ENCODE measurements at regions of chr7 and their contacts with region 1.

Region 1: GRCh38 chr7:32479574-32480200 is 10.5 kb downstream of the LSM5 start:
- DNase-seq: peak; percentile 43
- H3K4me3 ChIP-seq: no peak overlapping the region
- H3K27ac ChIP-seq: no peak overlapping the region
- H3K27me3 ChIP-seq: no peaks in the 10 kb centered on the region
- CTCF ChIP-seq: peak; percentile 94

Region 2: GRCh38 chr7:31134246-31135188 is 1345.2 kb before region 1 on chr7:
- CTCF ChIA-PET with region 1: interaction called, 12 read pairs
- POLR2A ChIA-PET with region 1: no interaction called
- DNase-seq: peak; percentile 23
- H3K4me3 ChIP-seq: no peak overlapping the region
- H3K27ac ChIP-seq: no peak overlapping the region
- H3K27me3 ChIP-seq: no peaks in the 10 kb centered on the region
- CTCF ChIP-seq: peak; percentile 72

Region 3: GRCh38 chr7:31744294-31744874 is 735.3 kb before region 1 on chr7:
- CTCF ChIA-PET with region 1: interaction called, 13 read pairs
- POLR2A ChIA-PET with region 1: no interaction called
- DNase-seq: peak; percentile 36
- H3K4me3 ChIP-seq: no peak overlapping the region
- H3K27ac ChIP-seq: no peak overlapping the region
- H3K27me3 ChIP-seq: no peaks in the 10 kb centered on the region
- CTCF ChIP-seq: peak; percentile 83

Region 4: GRCh38 chr7:32204361-32205018 is 275.2 kb before region 1 on chr7:
- CTCF ChIA-PET with region 1: interaction called, 114 read pairs
- POLR2A ChIA-PET with region 1: no interaction called
- DNase-seq: peak; percentile 41
- H3K4me3 ChIP-seq: no peak overlapping the region
- H3K27ac ChIP-seq: no peak overlapping the region
- H3K27me3 ChIP-seq: no peaks in the 10 kb centered on the region
- CTCF ChIP-seq: peak; percentile 64

Region 5: GRCh38 chr7:32490127-32490822 is 10.6 kb after region 1 on chr7 and contains the start of gene LSM5:
- CTCF ChIA-PET with region 1: interaction called, 13 read pairs
- POLR2A ChIA-PET with region 1: no interaction called
- DNase-seq: peak; percentile 74
- H3K4me3 ChIP-seq: peak within 1 kb of the TSS; percentile 88
- H3K27ac ChIP-seq: peak within 1 kb of the TSS; percentile 68
- H3K27me3 ChIP-seq: no peaks in the 10 kb centered on the region
- CTCF ChIP-seq: no peak
- polyA plus RNA-seq, gene LSM5: 22.6 and 36.7 TPM in 2 replicates

Measured in AG04450 (cell line).